ENCODE measurements at regions of chr19 and their contacts with region 1.

Region 1: DNA sequence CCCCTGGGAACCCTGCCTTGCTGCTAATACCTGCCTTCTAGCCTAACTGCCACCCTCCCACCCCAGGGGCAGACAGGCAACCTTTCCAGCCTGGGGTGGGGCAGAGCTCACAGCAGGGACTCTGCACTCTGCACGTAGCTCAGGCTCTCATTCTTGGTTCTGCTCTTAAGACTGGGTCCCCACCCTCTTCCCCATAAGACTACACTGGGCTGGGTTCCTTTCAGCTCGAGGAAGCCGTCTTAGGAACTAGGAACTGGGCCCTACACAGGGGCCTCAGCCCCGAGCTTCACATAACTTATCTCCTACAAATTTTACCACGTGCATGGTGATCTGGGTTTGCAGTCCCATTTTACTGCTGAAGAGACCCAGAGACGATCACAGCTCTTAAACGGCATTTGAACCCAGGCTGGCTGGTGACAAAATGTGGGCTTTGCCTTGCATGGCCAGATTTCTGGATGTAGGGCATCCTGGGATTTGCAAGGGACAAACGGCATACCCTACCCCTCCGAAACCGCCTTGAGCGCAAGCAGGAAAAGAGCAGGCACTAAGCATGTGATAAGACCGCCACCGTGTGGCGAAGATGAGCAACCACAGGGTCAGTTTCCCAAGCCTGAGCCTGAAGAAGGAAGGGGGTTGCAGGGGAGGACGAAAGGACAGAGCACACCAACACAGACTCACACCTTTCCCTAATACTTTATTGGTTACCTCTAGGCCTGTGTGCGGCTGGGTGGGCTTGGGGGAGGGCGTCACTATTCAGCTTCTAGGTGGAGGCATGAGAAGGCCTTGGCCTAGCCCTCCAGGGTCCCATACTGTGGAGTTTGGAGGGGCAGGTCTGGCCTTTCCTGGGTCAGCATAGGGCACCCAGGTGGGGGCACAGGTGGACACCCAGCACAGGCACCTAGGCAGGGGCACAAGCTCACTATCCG is 5.1 kb downstream of the JUNB start:
- DNase-seq: peak; percentile 68 to 86 (median 79)
- ATAC-seq: peak; percentile 14
- H3K4me3 ChIP-seq: peak overlapping the region; percentile 44
- H3K4me3 Mint-ChIP-seq: peak overlapping the region; percentile 55 to 87 (median 80)
- H3K27ac ChIP-seq: peak overlapping the region; percentile 56
- H3K27ac Mint-ChIP-seq: peak overlapping the region; percentile 87 to 100 (median 91)
- H3K4me1 ChIP-seq: peaks cover 21 to 30% of the 10 kb centered on the region in 2 donors
- H3K4me1 Mint-ChIP-seq: peaks cover 19 to 42% (median 37%) of the 10 kb centered on the region in 7 donors
- H3K27me3 ChIP-seq: no peaks in the 10 kb centered on the region
- H3K27me3 Mint-ChIP-seq: peaks cover 0 to 2% (median 0%) of the 10 kb centered on the region in 5 donors

Region 2: GRCh38 chr19:12681074-12681951 is 115.1 kb before region 1 on chr19 and contains the start of gene DHPS:
- CTCF ChIA-PET with region 1: interaction called, 4 read pairs
- POLR2A ChIA-PET with region 1: interaction called, 6 read pairs
- intact Hi-C with region 1: loop called in 1 of 2 experiments (anchors 1 kb)
- DNase-seq: peak; percentile 58 to 95 (median 93)
- ATAC-seq: peak; percentile 85
- H3K4me3 ChIP-seq: peak within 1 kb of the TSS; percentile 100
- H3K4me3 Mint-ChIP-seq: peak within 1 kb of the TSS; percentile 92 to 99 (median 96)
- H3K27ac ChIP-seq: peak within 1 kb of the TSS; percentile 95
- H3K27ac Mint-ChIP-seq: peak within 1 kb of the TSS; percentile 86 to 98 (median 94)
- H3K4me1 ChIP-seq: peaks cover 6 to 19% of the 10 kb centered on the region in 2 donors
- H3K4me1 Mint-ChIP-seq: peaks cover 18 to 34% (median 26%) of the 10 kb centered on the region in 7 donors
- H3K27me3 ChIP-seq: no peaks in the 10 kb centered on the region
- H3K27me3 Mint-ChIP-seq: no peaks in the 10 kb centered on the region
- total RNA-seq, gene DHPS: 125 to 223 (median 174) TPM

Region 3: GRCh38 chr19:12722566-12723380 is 73.6 kb before region 1 on chr19:
- CTCF ChIA-PET with region 1: interaction called, 6 read pairs
- POLR2A ChIA-PET with region 1: interaction called, 33 read pairs
- intact Hi-C with region 1: loop called (anchors 1 kb)
- DNase-seq: peak; percentile 66 to 97 (median 91)
- ATAC-seq: peak; percentile 96
- H3K4me3 ChIP-seq: peak overlapping the region; percentile 91
- H3K4me3 Mint-ChIP-seq: peak overlapping the region; percentile 86 to 96 (median 93)
- H3K27ac ChIP-seq: peak overlapping the region; percentile 85
- H3K27ac Mint-ChIP-seq: peak overlapping the region; percentile 89 to 97 (median 95)
- H3K4me1 ChIP-seq: peaks cover 11 to 16% of the 10 kb centered on the region in 2 donors
- H3K4me1 Mint-ChIP-seq: peaks cover 20 to 43% (median 38%) of the 10 kb centered on the region in 7 donors
- H3K27me3 ChIP-seq: no peaks in the 10 kb centered on the region
- H3K27me3 Mint-ChIP-seq: peaks cover 0 to 2% (median 0%) of the 10 kb centered on the region in 5 donors

Region 4: DNA sequence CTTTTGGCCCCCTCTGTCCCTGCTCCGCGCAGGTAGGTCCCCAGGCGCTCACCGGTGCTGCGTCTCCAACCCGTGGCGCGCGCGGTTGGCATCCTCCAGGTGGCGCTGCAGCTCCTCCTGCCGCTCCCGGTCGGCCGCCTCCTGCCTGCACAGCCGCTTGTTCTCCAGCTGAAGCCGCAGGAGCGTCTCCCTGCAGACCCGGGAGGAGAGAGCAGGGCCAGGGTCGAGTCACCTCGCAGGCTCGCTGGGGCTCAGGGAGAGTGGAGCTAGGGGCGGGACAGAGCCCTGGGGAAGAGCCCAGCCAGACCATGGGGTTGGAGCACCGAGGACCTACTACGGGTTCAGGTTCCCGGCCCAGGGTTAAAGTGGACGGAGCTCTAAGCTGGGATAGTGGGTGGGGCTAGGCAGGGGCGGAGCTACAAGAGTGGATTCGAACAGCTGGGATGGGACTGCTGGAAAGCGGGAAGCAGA is 30.3 kb before region 1 on chr19:
- CTCF ChIA-PET with region 1: interaction called, 111 read pairs
- POLR2A ChIA-PET with region 1: interaction called, 29 read pairs
- intact Hi-C with region 1: loop called (anchors 1 kb)
- DNase-seq: peak in 8 of 9 donors; percentile 64 to 89 (median 72)
- ATAC-seq: peak; percentile 92
- H3K4me3 ChIP-seq: no peak overlapping the region
- H3K4me3 Mint-ChIP-seq: peak overlapping the region in 3 of 10 donors; percentile 7 to 60 (median 44)
- H3K27ac ChIP-seq: no peak overlapping the region
- H3K27ac Mint-ChIP-seq: no peak overlapping the region
- H3K4me1 ChIP-seq: no peaks in the 10 kb centered on the region
- H3K4me1 Mint-ChIP-seq: peaks cover 0 to 9% (median 0%) of the 10 kb centered on the region in 7 donors
- H3K27me3 ChIP-seq: no peaks in the 10 kb centered on the region
- H3K27me3 Mint-ChIP-seq: no peaks in the 10 kb centered on the region

Region 5: DNA sequence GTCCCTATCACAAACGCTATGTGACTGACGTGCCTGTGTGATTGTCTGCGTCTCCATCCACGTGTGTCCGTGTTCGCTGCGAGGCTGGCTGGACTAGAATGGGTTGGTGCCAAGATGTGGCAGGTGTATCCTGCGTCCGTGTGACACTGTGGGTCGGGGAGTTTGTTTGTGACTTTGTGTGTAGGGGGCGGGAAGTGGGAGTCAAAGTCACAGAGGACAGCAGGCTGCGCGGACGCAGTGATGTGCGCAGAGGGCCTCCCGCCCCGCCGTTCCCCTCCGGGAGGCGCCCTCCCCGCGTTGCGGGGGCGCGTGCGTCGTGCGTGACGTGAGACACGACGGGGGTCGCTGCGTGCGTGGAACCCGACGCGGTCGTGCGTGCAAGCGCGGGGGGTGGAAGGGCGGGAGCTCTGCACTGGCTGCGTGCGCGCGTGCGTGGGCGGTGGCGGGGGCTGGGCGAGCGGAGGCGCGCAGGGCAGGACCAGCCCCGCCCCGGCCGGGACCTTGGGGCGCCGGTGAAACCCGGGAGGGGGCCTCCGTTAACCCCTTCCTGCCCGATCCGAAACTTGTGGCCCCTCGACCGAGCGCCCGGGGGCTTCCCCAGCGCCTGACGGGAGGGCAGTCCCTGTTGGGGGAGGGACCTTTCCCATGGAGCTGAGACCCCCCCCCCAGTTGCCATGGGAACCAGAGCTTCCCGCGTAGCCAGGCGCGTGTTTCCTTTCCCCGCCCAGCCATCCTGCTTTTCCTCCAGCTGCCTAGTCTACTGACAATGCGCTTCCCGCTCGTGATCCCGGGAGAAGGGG is 14.0 kb before region 1 on chr19:
- CTCF ChIA-PET with region 1: interaction called, 169 read pairs
- POLR2A ChIA-PET with region 1: interaction called, 621 read pairs
- intact Hi-C with region 1: loop called (anchors 1 kb)
- DNase-seq: peak; percentile 93 to 99 (median 98)
- ATAC-seq: peak; percentile 81
- H3K4me3 ChIP-seq: peak overlapping the region; percentile 58
- H3K4me3 Mint-ChIP-seq: peak overlapping the region; percentile 76 to 96 (median 86)
- H3K27ac ChIP-seq: peak overlapping the region; percentile 98
- H3K27ac Mint-ChIP-seq: peak overlapping the region in 4 of 9 donors; percentile 88 to 99 (median 93)
- H3K4me1 ChIP-seq: peaks cover 33 to 58% of the 10 kb centered on the region in 2 donors
- H3K4me1 Mint-ChIP-seq: peaks cover 14 to 42% (median 33%) of the 10 kb centered on the region in 7 donors
- H3K27me3 ChIP-seq: no peaks in the 10 kb centered on the region
- H3K27me3 Mint-ChIP-seq: no peaks in the 10 kb centered on the region

Region 6: DNA sequence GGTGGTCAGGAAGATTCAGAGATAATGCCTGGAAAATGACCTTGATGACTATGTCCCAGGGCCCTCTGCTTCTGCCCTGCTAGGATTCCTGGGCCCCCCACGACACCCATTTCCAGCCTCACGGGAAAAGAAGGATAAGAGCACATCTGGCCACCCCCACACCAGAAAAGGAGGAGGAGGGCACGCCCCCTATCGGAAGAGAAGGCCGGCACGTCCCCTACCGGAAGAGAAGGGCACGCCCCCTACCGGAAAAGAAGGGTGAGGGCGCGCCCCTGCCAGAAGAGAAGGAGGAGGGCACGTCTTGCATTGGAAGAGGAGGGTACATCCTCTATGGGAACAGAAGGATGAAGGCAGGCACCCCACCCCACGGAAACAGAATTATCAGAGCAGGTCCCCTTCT is 438.1 kb after region 1 on chr19:
- CTCF ChIA-PET with region 1: no interaction called
- POLR2A ChIA-PET with region 1: no interaction called
- intact Hi-C with region 1: no loop called
- DNase-seq: peak in 8 of 9 donors; percentile 16 to 74 (median 50)
- ATAC-seq: peak; percentile 91
- H3K4me3 ChIP-seq: peak overlapping the region; percentile 35
- H3K4me3 Mint-ChIP-seq: peak overlapping the region; percentile 5 to 82 (median 59)
- H3K27ac ChIP-seq: no peak overlapping the region
- H3K27ac Mint-ChIP-seq: peak overlapping the region in 6 of 9 donors; percentile 4 to 88 (median 66)
- H3K4me1 ChIP-seq: peaks cover 9 to 15% of the 10 kb centered on the region in 2 donors
- H3K4me1 Mint-ChIP-seq: peaks cover 14 to 22% (median 15%) of the 10 kb centered on the region in 7 donors
- H3K27me3 ChIP-seq: no peaks in the 10 kb centered on the region
- H3K27me3 Mint-ChIP-seq: peaks cover 0 to 6% (median 0%) of the 10 kb centered on the region in 5 donors

Region 7: DNA sequence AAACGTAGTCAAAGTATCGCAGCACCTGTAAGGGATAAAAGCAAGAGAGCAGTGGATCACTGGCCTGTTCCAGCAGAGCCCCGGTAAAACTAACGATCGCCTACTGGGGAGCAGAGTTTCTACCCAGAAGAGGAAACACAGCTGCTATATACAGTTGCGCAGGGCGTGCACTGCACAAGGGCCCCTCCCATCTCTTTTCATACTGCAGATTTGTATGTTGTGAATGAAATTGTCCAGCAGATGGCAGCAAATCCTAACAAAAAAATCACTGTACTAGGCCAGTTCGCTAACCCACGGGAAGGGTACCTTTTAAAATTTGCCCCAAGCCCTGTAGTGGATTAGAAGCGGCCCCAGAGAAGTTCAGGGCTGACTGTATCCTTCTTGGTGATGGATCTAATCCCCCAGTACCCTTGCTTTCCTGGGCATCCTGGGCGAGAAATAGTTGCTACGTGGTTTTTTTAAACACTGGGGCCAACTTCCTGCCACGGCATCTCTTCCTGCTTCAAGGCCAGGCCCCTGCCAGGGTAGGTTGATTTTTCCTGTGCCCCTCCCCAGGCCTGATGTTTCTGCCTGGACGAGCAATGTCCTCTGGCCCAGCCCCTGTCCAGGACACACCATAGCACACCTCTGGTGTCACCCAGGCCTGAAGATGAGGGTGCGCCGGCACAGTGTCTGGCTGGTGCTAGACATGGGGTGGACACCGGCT is 480.8 kb after region 1 on chr19:
- CTCF ChIA-PET with region 1: no interaction called
- POLR2A ChIA-PET with region 1: no interaction called
- intact Hi-C with region 1: no loop called
- DNase-seq: peak; percentile 23 to 84 (median 79)
- ATAC-seq: peak; percentile 93
- H3K4me3 ChIP-seq: peak overlapping the region; percentile 41
- H3K4me3 Mint-ChIP-seq: peak overlapping the region; percentile 39 to 75 (median 64)
- H3K27ac ChIP-seq: peak overlapping the region; percentile 60
- H3K27ac Mint-ChIP-seq: peak overlapping the region; percentile 47 to 91 (median 84)
- H3K4me1 ChIP-seq: peaks cover 7% of the 10 kb centered on the region in 2 donors
- H3K4me1 Mint-ChIP-seq: peaks cover 8 to 33% (median 18%) of the 10 kb centered on the region in 7 donors
- H3K27me3 ChIP-seq: no peaks in the 10 kb centered on the region
- H3K27me3 Mint-ChIP-seq: peaks cover 0 to 10% (median 5%) of the 10 kb centered on the region in 5 donors